ENCODE measurements at regions of chr6 and their contacts with region 1.

Region 1: DNA sequence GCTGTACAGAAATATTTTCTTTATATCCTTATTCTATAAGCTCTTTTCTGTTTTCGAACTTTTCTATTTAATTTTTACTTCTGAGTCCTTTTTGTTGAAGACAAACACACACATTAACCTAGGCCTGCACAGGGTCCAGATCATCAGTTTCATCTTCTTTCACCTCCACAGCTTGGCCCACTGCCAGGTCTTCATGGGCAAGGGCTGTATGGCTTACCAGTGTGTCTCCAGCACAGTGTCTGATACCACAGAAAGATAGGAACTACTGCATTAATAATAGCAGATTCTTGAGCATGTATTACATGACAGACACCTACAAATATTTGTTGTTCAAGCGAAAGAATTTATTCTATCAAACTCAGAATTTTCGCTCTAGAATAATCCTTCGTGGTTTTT is 24.4 kb downstream of the QKI start:
- DNase-seq: no peak
- H3K4me3 ChIP-seq: no peak overlapping the region
- H3K27ac ChIP-seq: no peak overlapping the region
- H3K4me1 ChIP-seq: peaks cover 0 to 83% (median 51%) of the 10 kb centered on the region in 4 donors
- H3K27me3 ChIP-seq: no peaks in the 10 kb centered on the region
- CTCF ChIP-seq: no peak
- EP300 ChIP-seq: no peak
- POLR2A ChIP-seq: no peak

Region 2: DNA sequence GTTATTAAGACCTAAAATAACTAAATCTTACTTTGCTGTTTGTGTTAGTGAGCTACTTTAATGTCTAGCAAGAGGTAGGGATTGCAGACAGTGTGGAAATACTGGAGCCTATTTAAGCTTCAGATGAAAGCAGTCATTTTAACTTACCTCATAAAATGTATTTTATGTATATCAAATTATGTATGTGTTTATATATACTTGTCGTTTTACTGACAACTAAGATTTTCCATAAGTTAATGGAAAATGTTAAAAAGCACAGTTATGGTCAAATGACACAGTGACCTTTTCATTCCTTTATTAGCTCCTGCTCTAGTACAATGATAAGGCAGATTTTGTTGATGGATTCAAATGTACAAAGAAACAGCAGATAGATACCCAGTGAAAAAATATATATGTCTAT is 10.1 kb after region 1 on chr6:
- intact Hi-C with region 1: no loop called
- DNase-seq: no peak
- H3K4me3 ChIP-seq: no peak overlapping the region
- H3K27ac ChIP-seq: no peak overlapping the region
- H3K4me1 ChIP-seq: peaks cover 0 to 46% (median 42%) of the 10 kb centered on the region in 4 donors
- H3K27me3 ChIP-seq: no peaks in the 10 kb centered on the region
- CTCF ChIP-seq: no peak
- EP300 ChIP-seq: no peak
- POLR2A ChIP-seq: no peak

Region 3: GRCh38 chr6:163485388-163485851 is 46.5 kb after region 1 on chr6:
- intact Hi-C with region 1: no loop called
- DNase-seq: no peak
- H3K4me3 ChIP-seq: no peak overlapping the region
- H3K27ac ChIP-seq: no peak overlapping the region
- H3K4me1 ChIP-seq: peaks cover 0 to 72% (median 54%) of the 10 kb centered on the region in 4 donors
- H3K27me3 ChIP-seq: no peaks in the 10 kb centered on the region
- CTCF ChIP-seq: no peak
- EP300 ChIP-seq: no peak
- POLR2A ChIP-seq: no peak

Region 4: GRCh38 chr6:164322533-164322932 is 883.6 kb after region 1 on chr6:
- intact Hi-C with region 1: loop called (anchors 10 kb)
- DNase-seq: no peak
- H3K4me3 ChIP-seq: no peak overlapping the region
- H3K27ac ChIP-seq: peak overlapping the region in 2 of 4 donors; percentile 12 to 23
- H3K4me1 ChIP-seq: no peaks in the 10 kb centered on the region
- H3K27me3 ChIP-seq: no peaks in the 10 kb centered on the region
- CTCF ChIP-seq: no peak
- EP300 ChIP-seq: no peak
- POLR2A ChIP-seq: no peak

Measured in sigmoid colon (tissue), 7 donors.